IMR-90 (cell line): ENCODE measurements at regions of chr10 and their contacts with region 1.

Region 1: DNA sequence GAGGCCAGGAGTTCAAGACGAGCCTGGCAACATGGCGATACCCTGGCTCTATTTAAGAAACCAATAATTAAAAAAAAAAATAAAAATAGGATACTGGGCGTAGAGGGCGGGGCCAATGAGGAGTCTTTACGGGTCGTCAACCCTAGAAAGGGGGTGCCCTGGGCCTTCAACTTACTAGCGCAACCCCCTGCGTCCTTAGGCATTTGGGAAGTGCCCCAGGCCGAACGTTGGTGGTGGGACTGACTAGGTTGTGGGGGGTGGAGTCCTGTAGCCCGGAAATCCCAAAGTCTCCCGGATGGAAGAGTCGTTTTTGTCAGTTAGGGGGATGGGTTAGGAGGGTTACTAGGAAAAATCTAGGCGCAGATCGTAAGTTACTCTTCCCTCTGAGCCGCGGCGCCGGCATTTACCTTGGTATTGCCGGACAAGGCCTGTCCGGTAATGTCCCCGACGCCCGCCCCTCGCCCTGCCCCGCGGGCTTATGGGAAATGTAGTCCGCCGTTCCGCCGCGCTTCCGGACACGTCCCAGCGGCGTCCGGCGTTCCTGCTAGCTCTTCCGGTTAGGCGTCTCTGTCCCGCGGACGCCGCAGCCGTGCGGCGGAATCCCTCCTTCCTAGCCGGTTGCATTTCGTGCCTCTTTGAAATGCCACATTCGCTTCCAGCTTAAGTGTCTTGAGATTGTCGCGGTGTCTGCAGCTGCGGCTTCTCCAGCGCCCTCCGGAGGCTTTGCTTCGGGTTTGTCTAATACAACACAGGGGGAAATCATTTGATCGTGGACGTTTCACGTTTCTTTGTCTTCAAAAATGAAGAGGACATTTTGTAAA is 1.3 kb upstream of the ACBD5 start:
- DNase-seq: peak; percentile 92
- ATAC-seq: peak; percentile 82
- H3K4me3 ChIP-seq: peak overlapping the region; percentile 74
- H3K27ac ChIP-seq: peak overlapping the region; percentile 92
- H3K4me1 ChIP-seq: peaks cover 9% of the 10 kb centered on the region
- H3K27me3 ChIP-seq: no peaks in the 10 kb centered on the region
- CTCF ChIP-seq: no peak; the same call in 1 of the 2 replicates
- POLR2A ChIP-seq: peak; percentile 76
- RAD21 ChIP-seq: no peak

Region 2: GRCh38 chr10:27155066-27155754 is 86.7 kb before region 1 on chr10 and contains the start of gene MASTL:
- CTCF ChIA-PET with region 1: no interaction called
- POLR2A ChIA-PET with region 1: no interaction called
- dilution Hi-C with region 1: no loop called
- in situ Hi-C with region 1: no loop called
- intact Hi-C with region 1: loop called (anchors 1 kb)
- DNase-seq: peak; percentile 95
- ATAC-seq: peak; percentile 89
- H3K4me3 ChIP-seq: peak within 1 kb of the TSS; percentile 87
- H3K27ac ChIP-seq: peak within 1 kb of the TSS; percentile 90
- H3K4me1 ChIP-seq: 0 out of 2 replicates have a peak, but pooled peaks cover 1% of the 10 kb centered on the region
- H3K27me3 ChIP-seq: no peaks in the 10 kb centered on the region
- CTCF ChIP-seq: no peak
- POLR2A ChIP-seq: peak; percentile 96
- RAD21 ChIP-seq: no peak
- total RNA-seq, gene MASTL: 13.4 and 18.1 TPM in 2 replicates

Region 3: DNA sequence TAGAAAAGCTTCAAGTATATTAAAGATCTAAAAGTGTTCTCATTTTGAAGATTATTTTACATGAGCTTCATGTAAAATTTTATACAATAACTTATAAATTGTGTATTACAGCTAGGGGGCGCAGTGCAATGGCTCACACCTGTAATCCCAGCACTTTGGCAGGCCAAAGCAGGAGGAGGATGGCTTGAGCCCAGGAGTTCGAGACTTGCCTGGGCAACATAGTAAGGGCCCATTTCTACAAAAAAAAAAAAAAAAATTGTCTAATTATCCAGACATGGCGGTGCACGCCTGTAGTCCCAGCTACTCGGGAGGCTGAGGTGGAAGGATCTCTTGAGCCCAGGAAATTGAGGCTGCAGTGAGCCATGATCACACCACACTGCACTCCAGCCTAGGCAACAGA is 17.9 kb before region 1 on chr10:
- CTCF ChIA-PET with region 1: interaction called, 10 read pairs
- POLR2A ChIA-PET with region 1: no interaction called
- dilution Hi-C with region 1: no loop called
- in situ Hi-C with region 1: no loop called
- intact Hi-C with region 1: no loop called
- DNase-seq: peak; percentile 26
- ATAC-seq: no peak
- H3K4me3 ChIP-seq: no peak overlapping the region
- H3K27ac ChIP-seq: no peak overlapping the region
- H3K4me1 ChIP-seq: no peaks in the 10 kb centered on the region
- H3K27me3 ChIP-seq: no peaks in the 10 kb centered on the region
- CTCF ChIP-seq: peak; percentile 48
- POLR2A ChIP-seq: no peak
- RAD21 ChIP-seq: peak; percentile 31

Region 4: DNA sequence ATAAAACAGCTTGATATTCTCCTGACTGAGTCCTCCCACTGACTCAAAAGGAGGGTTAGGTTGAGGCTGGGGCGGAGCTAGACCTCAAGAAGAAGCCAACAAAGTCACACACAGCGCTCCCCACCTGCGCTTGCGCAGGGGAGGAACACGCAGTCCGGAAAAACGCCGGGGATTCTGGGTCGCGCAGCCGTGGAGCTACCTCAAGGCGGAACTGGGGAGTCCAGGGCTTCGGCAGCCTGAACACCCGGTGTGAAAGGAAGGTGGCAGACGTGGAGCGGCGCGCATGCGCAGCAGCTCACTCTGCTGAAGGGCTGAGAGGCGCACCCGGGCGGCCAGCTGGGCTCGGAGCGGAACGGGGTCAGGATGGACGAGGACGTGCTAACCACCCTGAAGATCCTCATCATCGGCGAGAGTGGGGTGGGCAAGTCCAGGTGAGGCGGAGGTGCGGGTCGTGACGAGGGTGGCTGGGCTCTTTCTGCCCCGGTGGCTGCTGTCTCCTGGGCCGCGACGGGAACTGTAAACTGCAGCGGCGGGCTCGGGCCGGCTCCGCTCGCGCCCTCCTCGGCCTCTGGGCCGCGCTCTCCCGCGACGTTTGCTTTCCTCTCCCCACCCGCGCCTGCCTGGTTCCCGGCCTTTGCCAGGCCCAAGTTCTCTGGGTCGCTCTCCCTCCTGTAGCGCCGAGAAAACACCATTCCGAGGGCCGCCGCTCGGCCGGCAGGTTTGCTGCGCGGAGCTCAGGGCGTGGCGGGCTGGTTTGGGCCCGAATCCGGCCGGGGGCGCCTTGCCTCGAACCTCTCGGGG is 262.3 kb after region 1 on chr10 and contains the start of gene RAB18:
- CTCF ChIA-PET with region 1: no interaction called
- POLR2A ChIA-PET with region 1: no interaction called
- dilution Hi-C with region 1: no loop called
- in situ Hi-C with region 1: loop called (anchors 10 kb)
- intact Hi-C with region 1: loop called (anchors 5 kb)
- DNase-seq: peak; percentile 99
- ATAC-seq: peak; percentile 99
- H3K4me3 ChIP-seq: peak within 1 kb of the TSS; percentile 81
- H3K27ac ChIP-seq: peak within 1 kb of the TSS; percentile 92
- H3K4me1 ChIP-seq: peaks cover 2% of the 10 kb centered on the region; the same call in 1 of the 2 replicates
- H3K27me3 ChIP-seq: no peaks in the 10 kb centered on the region; the same call in 1 of the 2 replicates
- CTCF ChIP-seq: no peak
- POLR2A ChIP-seq: peak; percentile 87
- RAD21 ChIP-seq: no peak
- total RNA-seq, gene RAB18: 17.6 and 53.0 TPM in 2 replicates